ENCODE measurements at regions of chr5 and their contacts with region 1.

Region 1: GRCh38 chr5:179516221-179516620 is 34.1 kb upstream of the RUFY1 start:
- DNase-seq: no peak
- H3K4me3 ChIP-seq: no peak overlapping the region
- H3K27ac ChIP-seq: no peak overlapping the region
- H3K27me3 ChIP-seq: peaks cover 0 to 9% (median 0%) of the 10 kb centered on the region in 45 donors
- CTCF ChIP-seq: no peak

Region 2: GRCh38 chr5:177958696-177959095 is 1557.5 kb before region 1 on chr5:
- intact Hi-C with region 1: loop called in 1 of 2 experiments (anchors 10 kb)
- DNase-seq: peak in 1 of 10 donors; percentile 24
- H3K4me3 ChIP-seq: no peak overlapping the region
- H3K27ac ChIP-seq: no peak overlapping the region
- H3K27me3 ChIP-seq: no peaks in the 10 kb centered on the region
- CTCF ChIP-seq: no peak

Measured in dorsolateral prefrontal cortex (tissue), 120 donors.